ENCODE measurements at regions of chr2 and their contacts with region 1.

Region 1: DNA sequence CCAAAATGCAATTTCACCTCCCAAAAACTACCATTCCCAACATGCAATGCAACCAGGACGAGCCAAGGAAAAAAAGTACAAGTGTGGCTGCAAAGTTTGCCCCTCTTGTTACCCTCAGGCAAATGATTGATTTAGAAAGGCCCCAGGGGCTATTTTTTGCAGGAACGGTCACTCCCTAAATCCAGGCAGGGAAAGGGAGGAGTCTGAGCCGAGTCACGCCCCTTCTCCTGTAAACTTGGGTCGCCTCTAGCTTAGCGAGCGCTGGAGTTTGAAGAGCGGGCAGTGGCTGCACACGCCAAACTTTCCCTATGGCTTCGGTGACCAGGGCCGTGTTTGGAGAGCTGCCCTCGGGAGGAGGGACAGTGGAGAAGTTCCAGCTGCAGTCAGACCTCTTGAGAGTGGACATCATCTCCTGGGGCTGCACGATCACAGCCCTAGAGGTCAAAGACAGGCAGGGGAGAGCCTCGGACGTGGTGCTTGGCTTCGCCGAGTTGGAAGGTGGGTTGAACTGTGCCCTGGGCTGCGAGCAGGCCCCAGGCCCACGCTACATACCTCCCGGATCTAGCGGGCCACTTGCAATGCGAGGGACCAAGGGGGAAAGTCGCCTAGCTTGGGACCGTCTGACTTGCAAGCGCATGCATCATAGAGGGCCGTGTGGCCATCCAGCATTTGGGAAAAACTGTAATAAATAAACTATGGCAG is at the start of gene GALM:
- DNase-seq: peak; percentile 8 to 57 (median 47)
- ATAC-seq: peak; percentile 39
- H3K4me3 ChIP-seq: peak within 1 kb of the TSS; percentile 76
- H3K4me3 Mint-ChIP-seq: peak within 1 kb of the TSS; percentile 85 to 97 (median 90)
- H3K27ac ChIP-seq: peak within 1 kb of the TSS; percentile 75
- H3K27ac Mint-ChIP-seq: peak within 1 kb of the TSS; percentile 82 to 96 (median 92)
- H3K4me1 ChIP-seq: peaks cover 9 to 43% of the 10 kb centered on the region in 2 donors
- H3K4me1 Mint-ChIP-seq: peaks cover 30 to 72% (median 53%) of the 10 kb centered on the region in 7 donors
- H3K27me3 ChIP-seq: no peaks in the 10 kb centered on the region
- H3K27me3 Mint-ChIP-seq: no peaks in the 10 kb centered on the region
- total RNA-seq, gene GALM: 4.3 to 52.5 (median 14.4) TPM

Region 2: DNA sequence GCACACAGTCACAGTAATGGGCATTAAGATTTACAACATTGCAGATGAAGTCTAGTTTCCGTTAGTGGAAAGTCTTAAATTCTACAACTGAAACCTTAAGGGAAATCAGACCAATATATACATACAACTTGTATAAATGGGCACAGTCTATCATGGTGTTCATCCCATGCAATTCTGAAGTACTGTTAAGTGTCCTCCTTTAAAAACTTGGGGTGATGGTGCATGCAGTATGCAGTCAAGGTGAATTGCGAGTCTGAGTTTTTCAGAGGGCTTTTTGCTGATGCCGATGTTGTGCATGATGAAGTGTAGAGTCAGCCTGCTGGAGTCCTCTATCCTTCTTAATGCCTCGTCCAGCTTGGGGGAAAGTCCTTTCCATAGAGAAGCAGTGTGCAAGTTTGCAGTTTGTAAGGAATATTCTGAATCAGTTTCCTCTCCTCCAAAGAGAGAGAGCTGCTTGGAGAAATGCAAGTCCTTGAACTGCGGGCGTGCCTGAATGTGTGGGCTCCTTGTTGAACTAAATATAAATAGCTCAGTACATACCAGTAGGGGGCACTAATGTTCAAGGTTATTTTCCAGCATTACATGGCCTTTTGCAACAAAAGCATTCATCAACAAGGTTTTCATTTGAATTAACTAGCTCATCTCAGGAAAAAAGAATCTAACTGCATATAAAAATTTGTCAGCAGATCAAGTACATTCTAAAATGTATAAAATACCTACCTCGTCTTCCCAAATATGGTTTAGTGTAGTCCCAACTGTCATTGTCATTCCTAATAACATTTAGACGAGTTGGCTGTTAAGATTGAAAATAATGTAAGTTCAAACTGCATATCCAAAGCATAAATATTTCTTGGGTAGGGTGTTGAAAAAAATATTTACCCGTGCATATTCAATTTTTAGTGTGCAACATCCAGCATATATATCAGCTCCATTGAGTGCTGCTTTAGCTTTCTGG is 84.5 kb before region 1 on chr2:
- CTCF ChIA-PET with region 1: interaction called, 10 read pairs
- POLR2A ChIA-PET with region 1: interaction called, 14 read pairs
- intact Hi-C with region 1: loop called in 1 of 2 experiments (anchors 5 kb)
- DNase-seq: peak in 7 of 9 donors; percentile 64 to 83 (median 77)
- ATAC-seq: peak; percentile 94
- H3K4me3 ChIP-seq: no peak overlapping the region
- H3K4me3 Mint-ChIP-seq: no peak overlapping the region
- H3K27ac ChIP-seq: no peak overlapping the region
- H3K27ac Mint-ChIP-seq: no peak overlapping the region
- H3K4me1 ChIP-seq: peaks cover 0 to 3% of the 10 kb centered on the region in 2 donors
- H3K4me1 Mint-ChIP-seq: peaks cover 0 to 23% (median 0%) of the 10 kb centered on the region in 7 donors
- H3K27me3 ChIP-seq: no peaks in the 10 kb centered on the region
- H3K27me3 Mint-ChIP-seq: no peaks in the 10 kb centered on the region

Region 3: GRCh38 chr2:38653715-38654527 is 12.1 kb before region 1 on chr2:
- CTCF ChIA-PET with region 1: interaction called, 4 read pairs
- POLR2A ChIA-PET with region 1: interaction called, 23 read pairs
- intact Hi-C with region 1: loop called in 1 of 2 experiments (anchors 1 kb)
- DNase-seq: peak in 2 of 9 donors; percentile 16 to 63
- ATAC-seq: peak; percentile 71
- H3K4me3 ChIP-seq: no peak overlapping the region
- H3K4me3 Mint-ChIP-seq: peak overlapping the region in 5 of 10 donors; percentile 4 to 65 (median 41)
- H3K27ac ChIP-seq: no peak overlapping the region
- H3K27ac Mint-ChIP-seq: peak overlapping the region in 7 of 9 donors; percentile 0 to 92 (median 19)
- H3K4me1 ChIP-seq: peaks cover 0 to 27% of the 10 kb centered on the region in 2 donors
- H3K4me1 Mint-ChIP-seq: peaks cover 11 to 67% (median 25%) of the 10 kb centered on the region in 7 donors
- H3K27me3 ChIP-seq: no peaks in the 10 kb centered on the region
- H3K27me3 Mint-ChIP-seq: no peaks in the 10 kb centered on the region

Region 4: DNA sequence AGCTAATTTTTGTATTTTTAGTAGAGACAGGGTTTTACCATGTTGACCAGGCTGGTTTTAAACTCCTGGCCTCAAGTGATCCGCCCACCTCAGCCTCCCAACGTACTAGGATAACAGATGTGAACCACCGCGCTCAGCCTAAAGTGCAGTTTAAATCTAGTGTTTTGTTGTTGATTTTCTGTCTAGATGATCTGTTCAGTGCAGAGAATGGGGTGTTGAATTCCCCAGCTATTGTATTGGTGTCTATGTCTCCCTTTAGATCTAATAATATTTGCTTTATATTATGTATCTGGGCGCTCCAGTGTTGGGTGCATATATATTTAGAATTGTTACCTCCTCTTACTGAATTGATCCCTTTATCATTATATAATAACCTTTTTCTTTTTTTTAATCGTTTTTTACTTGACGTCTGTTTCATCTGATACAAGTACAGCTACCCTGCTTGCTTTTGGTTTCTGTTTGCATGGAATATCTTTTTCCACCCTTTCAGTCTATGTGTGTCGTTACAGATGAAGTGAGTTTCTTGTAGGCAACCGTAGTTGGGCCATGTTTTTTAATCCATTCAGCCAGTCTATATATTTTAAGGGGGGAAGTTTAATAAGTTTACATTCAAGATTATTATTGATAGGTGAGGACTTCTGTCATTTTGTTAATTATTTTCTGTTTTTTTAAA is 34.2 kb after region 1 on chr2:
- CTCF ChIA-PET with region 1: interaction called, 4 read pairs
- POLR2A ChIA-PET with region 1: interaction called, 6 read pairs
- intact Hi-C with region 1: loop called in 1 of 2 experiments (anchors 2 kb)
- DNase-seq: peak in 3 of 9 donors; percentile 14 to 47 (median 31)
- ATAC-seq: peak; percentile 55
- H3K4me3 ChIP-seq: peak overlapping the region; percentile 22
- H3K4me3 Mint-ChIP-seq: peak overlapping the region in 8 of 10 donors; percentile 37 to 73 (median 66)
- H3K27ac ChIP-seq: peak overlapping the region; percentile 29
- H3K27ac Mint-ChIP-seq: peak overlapping the region; percentile 35 to 88 (median 76)
- H3K4me1 ChIP-seq: peaks cover 4 to 63% of the 10 kb centered on the region in 2 donors
- H3K4me1 Mint-ChIP-seq: peaks cover 0 to 64% (median 32%) of the 10 kb centered on the region in 7 donors
- H3K27me3 ChIP-seq: no peaks in the 10 kb centered on the region
- H3K27me3 Mint-ChIP-seq: no peaks in the 10 kb centered on the region

Region 5: GRCh38 chr2:38778687-38779082 is 112.7 kb after region 1 on chr2:
- CTCF ChIA-PET with region 1: no interaction called
- POLR2A ChIA-PET with region 1: no interaction called
- intact Hi-C with region 1: loop called in 1 of 2 experiments (anchors 1 kb)
- DNase-seq: no peak
- ATAC-seq: no peak
- H3K4me3 ChIP-seq: peak overlapping the region; percentile 85
- H3K4me3 Mint-ChIP-seq: peak overlapping the region; percentile 94 to 100 (median 98)
- H3K27ac ChIP-seq: peak overlapping the region; percentile 81
- H3K27ac Mint-ChIP-seq: peak overlapping the region; percentile 92 to 99 (median 97)
- H3K4me1 ChIP-seq: peaks cover 0 to 5% of the 10 kb centered on the region in 2 donors
- H3K4me1 Mint-ChIP-seq: peaks cover 8 to 23% (median 17%) of the 10 kb centered on the region in 7 donors
- H3K27me3 ChIP-seq: no peaks in the 10 kb centered on the region
- H3K27me3 Mint-ChIP-seq: peaks cover 5 to 21% (median 17%) of the 10 kb centered on the region in 5 donors